Posterior vena cava (tissue), 2 donors: ENCODE measurements at regions of chr22 and their contacts with region 1.

Region 1: GRCh38 chr22:27617214-27617881 is 184.2 kb downstream of the MN1 start:
- DNase-seq: peak; percentile 38

Region 2: GRCh38 chr22:27032091-27032761 is 585.1 kb before region 1 on chr22:
- intact Hi-C with region 1: loop called in 1 of 2 experiments (anchors 5 kb)
- DNase-seq: peak; percentile 75

Region 3: GRCh38 chr22:28105413-28105812 is 488.1 kb after region 1 on chr22:
- intact Hi-C with region 1: no loop called
- DNase-seq: peak; percentile 79